ENCODE measurements at regions of chr2 and their contacts with region 1.

Region 1: DNA sequence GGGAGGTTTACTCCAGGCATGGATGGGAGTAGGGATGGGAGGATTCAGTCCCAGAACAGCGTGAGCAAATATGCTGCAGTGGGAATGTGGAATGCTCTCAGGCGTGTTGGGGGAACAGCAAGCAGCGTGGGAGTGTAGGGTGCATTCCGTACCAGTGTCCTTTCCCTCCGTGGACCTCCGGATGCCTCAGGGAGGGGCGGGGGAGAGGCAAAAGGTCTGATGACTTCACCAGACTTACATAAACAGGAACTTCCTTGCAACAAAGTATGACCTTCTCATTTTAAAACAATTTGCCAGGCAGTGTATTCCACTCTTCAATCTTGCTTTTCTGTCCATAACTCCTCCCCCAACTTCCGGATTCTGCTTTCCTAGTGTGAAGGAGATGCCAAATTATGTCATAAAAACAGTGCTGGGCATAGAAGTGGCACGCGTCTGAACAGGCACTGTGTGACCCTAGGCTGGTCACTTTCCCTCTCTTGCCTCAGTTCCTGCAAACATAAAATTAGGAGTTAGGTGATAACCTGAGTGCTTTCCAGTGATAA is 36.9 kb downstream of the RPL37A start:
- DNase-seq: peak; percentile 82
- ATAC-seq: peak; percentile 79 to 81

Region 2: DNA sequence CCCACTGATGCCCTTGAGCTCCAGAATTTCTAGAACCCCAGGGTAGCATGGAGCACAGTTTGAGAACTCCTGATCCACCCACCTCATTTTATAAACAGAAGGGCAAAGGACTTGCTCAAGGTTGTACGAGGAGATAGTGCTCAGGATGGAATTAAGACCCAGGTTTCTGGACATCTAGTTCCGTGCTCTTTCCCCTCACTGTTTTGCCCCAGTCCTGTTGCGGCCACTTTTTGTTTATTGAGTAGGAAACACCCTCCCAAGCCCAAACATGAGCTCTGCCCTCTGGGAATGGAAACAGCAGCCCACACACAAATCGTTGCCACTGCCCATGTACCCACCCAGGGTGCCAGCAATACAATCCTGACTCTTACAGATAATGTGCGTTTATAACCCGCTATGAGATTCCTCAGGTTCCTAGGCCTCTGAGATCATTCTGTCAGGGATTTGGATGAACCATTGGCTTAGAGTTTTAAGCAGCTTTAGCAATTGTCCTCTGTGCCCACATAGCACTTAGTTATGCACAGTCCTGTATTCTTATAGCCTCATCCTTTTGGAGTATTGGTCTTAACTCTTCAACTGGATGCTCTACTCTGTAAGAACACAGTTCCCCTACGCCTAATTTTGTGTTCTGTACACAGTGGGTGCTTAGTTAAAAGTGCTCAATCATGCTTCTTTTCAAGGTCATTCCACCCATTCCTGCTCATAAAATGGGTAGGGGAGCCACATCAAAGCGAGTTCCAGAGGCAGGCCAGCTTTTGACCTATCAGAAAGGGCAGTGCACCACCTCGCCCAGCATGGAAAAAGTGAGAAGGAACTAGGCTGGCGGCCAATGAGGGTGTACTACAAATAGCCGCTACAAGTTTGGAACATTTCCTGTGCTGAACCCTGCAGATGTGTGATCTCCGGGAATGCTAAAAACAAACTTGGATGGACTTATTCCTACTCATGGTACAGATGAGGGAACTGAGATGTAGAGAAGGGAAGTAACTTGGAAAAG is 37.4 kb after region 1 on chr2:
- intact Hi-C with region 1: loop called in 1 of 2 experiments (anchors 5 kb)
- DNase-seq: peak; percentile 87
- ATAC-seq: peak; percentile 92 to 93

Region 3: DNA sequence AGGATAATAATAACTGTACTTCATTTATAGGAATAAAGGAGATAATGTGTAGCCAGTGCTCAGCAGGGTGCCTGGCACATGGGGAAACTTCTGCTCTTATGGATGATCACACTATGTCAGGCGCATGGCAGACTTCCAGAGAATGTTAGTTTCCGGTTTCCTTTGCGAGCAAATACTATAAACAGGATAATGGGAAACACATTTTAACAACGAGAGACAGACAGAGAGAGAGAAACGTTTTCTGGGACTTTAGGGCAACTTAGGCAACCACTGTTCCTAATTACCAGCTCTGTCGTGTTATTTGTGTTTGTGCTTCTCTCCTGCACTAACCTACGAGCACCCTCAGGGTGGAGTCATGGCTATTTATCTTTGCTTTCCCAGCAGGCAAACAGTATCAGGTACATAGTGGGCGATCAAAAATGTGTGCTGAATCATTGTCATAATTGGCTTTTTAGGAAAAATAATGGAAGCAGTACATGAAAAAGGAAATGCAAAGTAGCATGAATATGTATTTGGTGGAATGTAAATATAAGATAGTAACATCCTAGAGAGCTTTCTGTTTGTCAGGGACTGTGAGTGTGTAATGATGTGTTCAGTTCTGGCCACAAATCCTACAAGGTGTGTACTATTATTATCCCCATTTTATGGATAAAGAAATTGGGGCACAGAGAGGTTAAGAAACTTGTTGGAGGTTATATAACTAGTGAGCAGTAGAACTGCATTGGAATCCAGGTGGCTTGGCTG is 60.9 kb after region 1 on chr2:
- intact Hi-C with region 1: loop called (anchors 10 kb)
- DNase-seq: no peak
- ATAC-seq: peak; percentile 26 to 40

Measured in left cardiac atrium (tissue), 4 donors.